Mammary epithelial cell (primary cell): ENCODE measurements at regions of chr21 and their contacts with region 1.

Region 1: DNA sequence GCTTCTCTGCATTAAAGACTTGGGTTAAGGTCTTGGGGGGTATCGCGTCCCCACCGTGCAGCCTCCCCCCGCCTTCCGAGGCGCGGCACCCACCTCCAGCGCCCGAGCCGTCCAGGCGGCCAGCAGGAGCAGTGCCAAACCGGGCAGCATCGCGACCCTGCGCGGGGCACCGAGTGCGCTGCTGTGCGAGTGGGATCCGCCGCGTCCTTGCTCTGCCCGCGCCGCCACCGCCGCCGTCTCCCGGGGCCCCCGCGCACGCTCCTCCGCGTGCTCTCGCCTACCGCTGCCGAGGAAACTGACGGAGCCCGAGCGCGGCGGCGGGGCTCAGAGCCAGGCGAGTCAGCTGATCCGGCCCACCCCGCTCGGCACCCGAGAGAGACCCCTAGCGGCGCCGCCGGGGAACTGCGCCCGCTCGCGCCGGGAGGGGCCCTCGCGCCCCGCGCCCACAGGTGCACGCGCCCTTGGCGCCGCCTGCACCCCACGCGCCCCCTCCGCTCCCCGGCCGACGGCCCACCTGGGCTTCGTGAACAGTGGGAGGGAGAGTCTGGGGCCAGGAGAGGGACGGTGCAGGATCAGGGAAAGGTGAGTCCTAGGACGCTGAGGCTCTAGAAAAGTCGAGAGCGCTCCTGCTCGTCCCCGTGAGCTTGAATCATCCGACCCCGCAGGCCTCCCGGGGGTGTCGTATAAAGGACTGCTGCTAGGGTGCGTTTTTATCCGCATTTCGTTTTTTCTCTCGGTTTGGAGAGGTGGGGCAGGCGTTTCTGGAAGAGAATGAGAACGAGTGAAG is at the start of gene APP:
- DNase-seq: peak; percentile 77
- H3K4me3 ChIP-seq: peak within 1 kb of the TSS; percentile 81 to 99 (median 94)
- H3K27ac ChIP-seq: peak within 1 kb of the TSS; percentile 85
- H3K4me1 ChIP-seq: peaks cover 31% of the 10 kb centered on the region
- H3K27me3 ChIP-seq: no peaks in the 10 kb centered on the region
- CTCF ChIP-seq: peak; percentile 59 to 71
- total RNA-seq, gene APP: 1,070 to 1,289 TPM

Region 2: DNA sequence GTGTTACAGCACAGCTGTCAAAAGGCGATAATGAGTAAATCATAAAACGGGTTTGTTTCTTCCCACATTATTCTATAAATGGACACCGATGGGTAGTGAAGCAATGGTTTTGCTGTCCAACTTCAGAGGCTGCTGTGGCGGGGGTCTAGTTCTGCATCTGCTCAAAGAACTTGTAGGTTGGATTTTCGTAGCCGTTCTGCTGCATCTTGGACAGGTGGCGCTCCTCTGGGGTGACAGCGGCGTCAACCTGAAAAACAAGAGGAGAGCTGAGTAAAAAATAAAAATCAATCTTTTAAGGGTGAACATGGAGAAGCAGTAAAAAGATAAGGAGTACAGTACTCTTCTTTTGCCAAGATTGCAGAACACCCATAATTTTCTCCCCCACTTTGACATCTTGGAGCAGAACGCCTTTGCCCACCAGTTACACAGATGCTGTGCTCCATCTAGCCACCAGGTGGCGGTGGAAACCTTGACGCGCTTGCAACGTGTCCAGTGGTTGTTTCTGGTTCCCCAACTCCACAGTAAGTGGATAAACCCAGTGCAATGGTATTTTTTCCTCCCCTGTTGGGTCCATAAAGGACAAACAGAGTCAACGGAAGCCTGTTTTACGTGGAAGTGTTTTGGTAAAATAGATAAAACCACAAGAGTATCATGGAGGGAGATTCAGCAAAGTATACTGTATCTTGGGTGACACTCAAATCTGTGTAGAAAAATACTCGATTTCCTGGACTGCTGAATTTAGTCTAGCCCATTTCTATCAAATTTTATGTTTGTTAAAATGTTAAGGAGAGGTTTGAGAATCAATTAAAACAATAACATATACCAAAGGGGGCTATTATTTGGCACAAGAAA is 288.9 kb before region 1 on chr21:
- CTCF ChIA-PET with region 1: no interaction called
- dilution Hi-C with region 1: no loop called
- in situ Hi-C with region 1: no loop called
- intact Hi-C with region 1: loop called (anchors 1 kb)
- DNase-seq: peak; percentile 26
- H3K4me3 ChIP-seq: no peak overlapping the region
- H3K27ac ChIP-seq: no peak overlapping the region
- H3K4me1 ChIP-seq: no peaks in the 10 kb centered on the region
- H3K27me3 ChIP-seq: no peaks in the 10 kb centered on the region
- CTCF ChIP-seq: peak; percentile 82 to 88

Region 3: DNA sequence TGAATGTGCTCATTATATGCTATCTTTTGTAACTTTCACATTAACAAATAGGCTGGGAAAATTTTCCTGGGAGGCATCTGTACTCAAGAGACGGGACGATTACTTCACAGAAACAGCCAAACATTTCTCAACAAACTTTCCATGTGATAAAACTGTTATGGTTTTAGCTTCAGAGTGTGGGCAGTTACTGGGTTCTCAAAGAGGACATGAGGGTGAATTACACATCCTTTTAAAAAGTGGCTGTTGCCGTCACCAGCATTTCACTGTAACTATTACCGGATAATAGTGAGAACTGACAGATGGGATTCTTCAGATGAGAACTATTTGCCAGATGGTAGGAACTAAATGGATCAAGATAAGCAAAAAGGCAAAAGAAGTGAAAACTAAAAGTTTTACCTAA is 109.2 kb before region 1 on chr21:
- CTCF ChIA-PET with region 1: no interaction called
- dilution Hi-C with region 1: no loop called
- in situ Hi-C with region 1: no loop called
- intact Hi-C with region 1: loop called (anchors 10 kb)
- DNase-seq: no peak
- H3K4me3 ChIP-seq: no peak overlapping the region
- H3K27ac ChIP-seq: no peak overlapping the region
- H3K4me1 ChIP-seq: peaks cover 14% of the 10 kb centered on the region
- H3K27me3 ChIP-seq: no peaks in the 10 kb centered on the region
- CTCF ChIP-seq: no peak

Region 4: DNA sequence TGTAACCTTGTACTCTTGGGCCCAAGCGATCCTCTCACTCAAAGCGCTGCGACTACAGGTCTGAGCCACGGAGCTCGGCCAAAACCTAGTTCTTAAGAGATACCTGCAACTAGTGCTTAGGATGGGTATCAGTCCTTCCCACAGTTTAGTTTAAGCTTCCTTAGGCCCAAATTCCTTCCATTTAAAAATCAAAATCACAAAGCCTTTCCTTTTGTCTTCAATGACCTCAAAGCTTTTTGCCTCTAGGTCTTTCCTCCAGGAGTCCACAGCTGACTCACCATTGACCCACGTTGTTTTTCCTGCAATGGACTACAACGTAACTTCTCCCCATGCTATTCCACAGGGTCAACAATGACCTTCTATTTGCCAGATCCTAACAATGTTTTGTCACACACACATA is 64.1 kb before region 1 on chr21:
- CTCF ChIA-PET with region 1: no interaction called
- dilution Hi-C with region 1: loop called (anchors 5 kb)
- in situ Hi-C with region 1: no loop called
- intact Hi-C with region 1: no loop called
- DNase-seq: no peak
- H3K4me3 ChIP-seq: no peak overlapping the region
- H3K27ac ChIP-seq: no peak overlapping the region
- H3K4me1 ChIP-seq: no peaks in the 10 kb centered on the region
- H3K27me3 ChIP-seq: no peaks in the 10 kb centered on the region
- CTCF ChIP-seq: no peak

Region 5: DNA sequence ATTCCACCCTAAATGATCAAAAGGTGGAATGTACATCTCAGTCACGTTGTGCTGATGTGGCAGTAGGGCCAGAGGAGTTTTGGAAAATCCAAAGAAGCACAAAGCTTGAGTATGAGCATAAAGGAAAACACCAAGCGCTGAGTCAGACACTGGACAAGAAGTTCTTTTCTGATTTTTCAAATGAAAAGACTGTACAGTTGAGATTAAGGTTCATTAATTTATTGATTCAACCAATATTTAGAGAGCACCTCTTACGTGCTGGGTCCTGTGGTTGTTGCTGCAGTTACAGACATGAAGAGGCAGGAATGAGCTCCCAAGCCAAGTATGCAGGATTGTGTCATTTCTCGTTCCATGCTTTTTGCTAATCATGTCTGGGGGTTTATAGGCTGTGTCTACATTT is 28.8 kb after region 1 on chr21:
- CTCF ChIA-PET with region 1: no interaction called
- dilution Hi-C with region 1: no loop called
- in situ Hi-C with region 1: no loop called
- intact Hi-C with region 1: loop called (anchors 2 kb)
- DNase-seq: peak; percentile 93
- H3K4me3 ChIP-seq: peak overlapping the region in 1 of 3 experiments; percentile 1
- H3K27ac ChIP-seq: peak overlapping the region; percentile 88
- H3K4me1 ChIP-seq: peaks cover 13% of the 10 kb centered on the region
- H3K27me3 ChIP-seq: no peaks in the 10 kb centered on the region
- CTCF ChIP-seq: no peak

Region 6: DNA sequence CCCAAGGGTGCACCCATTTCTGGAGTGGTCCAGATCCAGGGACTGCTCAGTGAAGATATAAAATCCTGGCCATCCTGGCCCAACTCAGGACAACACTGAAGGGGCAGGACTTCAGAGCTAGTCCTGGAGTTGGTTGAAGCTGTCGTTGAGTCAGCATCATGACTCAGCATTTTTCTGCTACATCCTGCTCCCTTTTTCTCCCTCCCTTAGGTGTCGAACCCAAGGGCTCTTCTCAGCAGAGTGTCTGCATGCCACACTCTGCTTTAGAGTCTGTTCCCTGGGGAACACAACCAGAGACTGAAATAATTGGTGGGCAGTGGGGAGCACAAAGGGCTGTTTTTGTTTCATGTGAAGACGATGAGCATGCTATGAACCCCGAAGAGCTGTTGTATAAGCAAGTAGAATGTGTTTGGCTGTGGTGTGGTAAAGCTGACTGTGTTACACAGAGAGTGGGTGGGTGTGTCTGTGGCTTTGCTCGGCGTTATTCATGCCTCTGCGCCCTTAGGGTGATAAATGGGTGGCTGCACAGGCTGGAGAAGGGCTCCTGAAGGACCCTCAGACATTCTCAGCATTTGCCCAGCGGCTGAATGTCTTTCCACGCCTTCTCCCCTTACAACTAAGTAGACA is 235.2 kb after region 1 on chr21:
- CTCF ChIA-PET with region 1: no interaction called
- dilution Hi-C with region 1: no loop called
- in situ Hi-C with region 1: no loop called
- intact Hi-C with region 1: loop called (anchors 5 kb)
- DNase-seq: peak; percentile 91
- H3K4me3 ChIP-seq: peak overlapping the region; percentile 44 to 53 (median 52)
- H3K27ac ChIP-seq: peak overlapping the region; percentile 74
- H3K4me1 ChIP-seq: peaks cover 15% of the 10 kb centered on the region
- H3K27me3 ChIP-seq: no peaks in the 10 kb centered on the region
- CTCF ChIP-seq: no peak